H1 (cell line): ENCODE measurements at regions of chr7 and their contacts with region 1.

Region 1: DNA sequence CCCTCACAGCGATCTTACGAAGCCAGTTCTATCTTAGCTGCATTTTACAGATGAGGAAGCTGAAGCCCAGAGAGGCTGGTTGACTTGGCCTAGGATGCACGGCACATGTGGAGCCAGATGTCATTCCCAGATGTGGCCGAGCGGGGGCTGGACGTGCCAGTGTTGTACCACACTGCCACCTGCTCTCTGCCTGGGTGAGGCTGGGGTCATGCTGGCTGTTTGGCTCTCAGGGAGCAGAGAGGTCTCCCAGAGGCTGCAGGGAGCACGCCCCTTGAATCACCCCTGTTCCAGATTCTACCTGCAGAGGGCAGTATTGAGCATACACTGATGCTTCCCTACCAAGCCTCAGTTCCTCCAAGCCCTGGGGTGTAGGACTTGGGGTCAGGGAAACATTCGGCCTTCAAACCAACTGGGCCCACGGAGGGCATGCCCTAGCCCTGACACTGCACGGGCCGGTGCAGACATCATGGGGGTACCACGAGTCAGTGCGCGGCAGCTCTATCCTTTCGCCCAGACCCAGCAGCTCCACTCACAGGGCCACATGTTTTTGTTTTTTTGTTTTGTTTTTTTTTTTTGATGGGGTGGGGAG is 3.8 kb upstream of the GTF2IRD1 start:
- DNase-seq: peak; percentile 82 to 97
- H3K4me3 ChIP-seq: no peak overlapping the region
- H3K27ac ChIP-seq: no peak overlapping the region
- H3K4me1 ChIP-seq: peaks cover 0 to 9% (median 5%) of the 10 kb centered on the region in 4 experiments; a peak in 6 of 7 replicates
- H3K27me3 ChIP-seq: no peaks in the 10 kb centered on the region
- CTCF ChIP-seq: peak; percentile 66 to 95 (median 86)
- EP300 ChIP-seq: no peak
- POLR2A ChIP-seq: no peak
- RAD21 ChIP-seq: peak; percentile 69 to 72

Region 2: DNA sequence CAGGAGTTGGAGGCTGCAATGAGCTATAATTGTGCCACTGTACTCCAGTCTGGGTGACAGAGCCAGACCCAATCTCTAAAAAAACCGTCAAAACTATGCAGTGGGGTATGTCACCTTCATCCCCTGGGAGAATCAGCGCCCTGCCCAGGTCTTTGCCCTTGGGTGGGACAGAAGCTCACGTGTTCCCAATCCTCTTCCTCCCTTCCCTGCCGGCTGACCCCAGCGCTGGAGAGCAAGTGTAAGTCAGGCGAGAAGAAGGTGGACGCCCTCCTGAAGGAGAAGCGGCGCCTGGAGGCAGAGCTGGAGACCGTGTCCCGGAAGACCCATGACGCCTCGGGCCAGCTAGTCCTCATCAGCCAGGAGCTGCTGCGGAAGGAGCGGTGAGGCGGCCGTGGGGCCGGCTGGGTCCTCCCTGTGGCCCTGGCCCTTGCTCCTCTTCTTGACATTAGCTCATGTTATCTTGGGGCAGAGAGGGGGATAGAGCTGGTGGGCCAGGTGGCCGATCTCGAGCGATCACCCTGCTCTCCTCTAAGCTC is 61.0 kb before region 1 on chr7:
- CTCF ChIA-PET with region 1: no interaction called
- POLR2A ChIA-PET with region 1: no interaction called
- DNase-seq: no peak
- H3K4me3 ChIP-seq: no peak overlapping the region
- H3K27ac ChIP-seq: no peak overlapping the region
- H3K4me1 ChIP-seq: peaks cover 0 to 3% (median 0%) of the 10 kb centered on the region in 4 experiments; a peak in 1 of 7 replicates
- H3K27me3 ChIP-seq: no peaks in the 10 kb centered on the region
- CTCF ChIP-seq: no peak
- EP300 ChIP-seq: no peak
- POLR2A ChIP-seq: no peak
- RAD21 ChIP-seq: no peak

Region 3: GRCh38 chr7:74464943-74465886 is 15.3 kb after region 1 on chr7:
- CTCF ChIA-PET with region 1: interaction called, 19 read pairs
- POLR2A ChIA-PET with region 1: interaction called, 7 read pairs
- DNase-seq: no peak
- H3K4me3 ChIP-seq: no peak overlapping the region
- H3K27ac ChIP-seq: no peak overlapping the region
- H3K4me1 ChIP-seq: peaks cover 0 to 6% (median under 1%) of the 10 kb centered on the region in 4 experiments; a peak in 3 of 7 replicates
- H3K27me3 ChIP-seq: no peaks in the 10 kb centered on the region
- CTCF ChIP-seq: no peak
- EP300 ChIP-seq: no peak
- POLR2A ChIP-seq: no peak
- RAD21 ChIP-seq: no peak

Region 4: DNA sequence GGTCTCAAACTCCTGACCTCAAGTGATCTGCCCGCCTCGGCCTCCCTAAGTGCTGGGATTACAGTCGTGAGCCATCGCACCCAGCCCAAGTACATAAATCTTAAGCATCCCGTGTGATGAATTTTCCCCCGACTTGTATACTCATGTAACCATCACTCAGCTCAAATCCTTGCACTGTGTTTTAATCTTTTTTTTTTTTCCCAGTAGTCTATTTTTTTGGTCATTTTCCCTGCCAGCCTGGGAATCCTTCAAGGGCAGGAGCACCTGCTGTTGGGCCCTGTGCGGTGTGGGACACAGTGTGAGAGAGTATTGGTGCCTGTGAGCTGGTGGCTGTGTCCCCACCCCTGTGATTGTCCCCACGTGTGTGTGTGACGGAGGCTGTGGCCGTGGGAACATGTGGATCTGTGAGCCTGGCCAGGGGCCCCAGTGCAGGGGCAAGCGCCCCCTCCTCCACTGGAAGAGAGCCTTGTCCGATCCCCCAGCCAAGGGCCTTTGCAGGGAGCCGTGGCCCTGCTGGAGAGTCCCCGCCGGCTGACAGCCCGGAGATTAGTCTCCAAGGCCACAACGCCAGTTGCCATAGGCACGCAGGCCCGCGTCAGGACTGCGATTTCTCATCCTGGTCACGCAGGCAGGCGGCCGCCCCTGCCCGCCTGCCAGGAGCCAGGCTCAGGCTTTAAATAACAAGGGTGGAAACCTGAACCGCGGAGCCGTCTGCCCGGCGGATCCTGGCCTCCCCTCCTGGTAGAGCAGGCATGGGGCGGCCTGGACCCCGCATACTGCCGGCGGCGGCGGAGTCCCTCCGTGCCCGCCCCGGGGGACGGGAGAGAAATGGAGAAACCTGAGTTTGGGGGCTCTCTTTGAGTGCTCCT is 30.3 kb after region 1 on chr7:
- CTCF ChIA-PET with region 1: interaction called, 16 read pairs
- POLR2A ChIA-PET with region 1: interaction called, 5 read pairs
- DNase-seq: peak; percentile 44 to 81
- H3K4me3 ChIP-seq: peak overlapping the region in 2 of 4 experiments; percentile 14 to 41; a peak in 4 of 8 replicates
- H3K27ac ChIP-seq: no peak overlapping the region
- H3K4me1 ChIP-seq: peaks cover 3 to 17% (median 10%) of the 10 kb centered on the region in 4 experiments; a peak in 5 of 7 replicates
- H3K27me3 ChIP-seq: no peaks in the 10 kb centered on the region
- CTCF ChIP-seq: peak in 1 of 3 experiments; percentile 1; a peak in 1 of 4 replicates
- EP300 ChIP-seq: no peak
- POLR2A ChIP-seq: no peak; a peak in 1 of 3 replicates
- RAD21 ChIP-seq: peak in 1 of 2 experiments; percentile 14; a peak in 2 of 4 replicates